ENCODE measurements at regions of chr20 and their contacts with region 1.

Region 1: GRCh38 chr20:44080646-44081267 is 106.2 kb downstream of the JPH2 start:
- DNase-seq: peak; percentile 55
- ATAC-seq: peak; percentile 93
- H3K4me3 ChIP-seq: no peak overlapping the region
- H3K27ac ChIP-seq: no peak overlapping the region
- H3K4me1 ChIP-seq: 0 out of 2 replicates have a peak, but pooled peaks cover 4% of the 10 kb centered on the region
- H3K27me3 ChIP-seq: no peaks in the 10 kb centered on the region
- CTCF ChIP-seq: peak; percentile 93 to 99 (median 99); a peak in 5 of 6 replicates
- EP300 ChIP-seq: no peak
- POLR2A ChIP-seq: no peak
- RAD21 ChIP-seq: peak; percentile 100

Region 2: DNA sequence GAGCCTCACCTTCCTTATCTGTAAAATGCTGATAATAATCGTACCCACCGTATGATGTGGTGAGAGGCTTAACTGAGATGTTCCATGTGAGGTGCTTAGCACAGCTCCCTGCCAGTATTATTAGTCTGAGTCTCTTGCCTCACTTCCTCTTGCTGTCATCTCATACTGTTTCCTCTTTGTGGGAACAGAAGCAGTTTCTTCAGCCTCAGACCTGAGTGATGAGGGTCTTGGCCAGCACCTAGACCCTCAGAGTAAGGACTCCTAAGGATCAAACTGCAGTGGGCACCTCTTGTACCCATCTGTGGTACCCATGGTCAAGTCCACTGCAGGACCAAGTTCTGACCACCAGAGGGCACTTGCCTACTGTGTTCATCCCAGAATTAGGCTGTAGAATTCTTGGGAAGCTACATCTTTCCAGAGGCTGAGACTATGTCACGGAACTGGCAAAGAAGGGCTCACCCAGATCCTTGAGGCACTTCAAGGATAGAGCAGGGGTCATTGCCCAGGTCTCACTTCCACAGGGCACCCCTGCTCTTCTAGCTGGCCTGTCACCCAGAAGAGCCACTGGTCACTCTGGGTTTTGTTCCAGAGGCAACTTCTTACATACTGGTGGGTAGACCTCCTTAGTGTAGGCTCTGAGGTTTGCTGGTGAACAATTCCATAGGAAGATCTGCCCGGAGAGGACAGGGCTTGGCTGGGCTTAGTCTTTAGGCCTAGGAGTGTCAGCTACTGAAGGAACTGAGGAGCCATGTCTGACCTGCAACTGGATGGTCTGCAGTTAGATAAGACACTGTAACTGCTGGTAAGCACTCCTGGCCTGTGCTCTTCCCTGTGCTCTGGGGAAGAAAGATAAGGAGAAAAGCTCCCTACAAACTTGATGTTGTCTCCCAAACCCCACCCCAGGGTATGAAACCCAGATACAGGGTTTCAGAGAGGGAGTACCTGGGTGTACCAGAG is 542.6 kb before region 1 on chr20:
- CTCF ChIA-PET with region 1: interaction called, 40 read pairs
- POLR2A ChIA-PET with region 1: no interaction called
- RAD21 ChIA-PET with region 1: interaction called, 8 read pairs
- SMC1A ChIA-PET with region 1: interaction called, 5 read pairs
- in situ Hi-C with region 1: loop called (anchors 5 kb)
- intact Hi-C with region 1: no loop called
- DNase-seq: no peak
- ATAC-seq: peak; percentile 85
- H3K4me3 ChIP-seq: no peak overlapping the region
- H3K27ac ChIP-seq: no peak overlapping the region
- H3K4me1 ChIP-seq: no peaks in the 10 kb centered on the region
- H3K27me3 ChIP-seq: no peaks in the 10 kb centered on the region; a peak in 2 of 4 replicates
- CTCF ChIP-seq: peak; percentile 83 to 92 (median 90)
- EP300 ChIP-seq: no peak
- POLR2A ChIP-seq: no peak
- RAD21 ChIP-seq: peak; percentile 82

Region 3: DNA sequence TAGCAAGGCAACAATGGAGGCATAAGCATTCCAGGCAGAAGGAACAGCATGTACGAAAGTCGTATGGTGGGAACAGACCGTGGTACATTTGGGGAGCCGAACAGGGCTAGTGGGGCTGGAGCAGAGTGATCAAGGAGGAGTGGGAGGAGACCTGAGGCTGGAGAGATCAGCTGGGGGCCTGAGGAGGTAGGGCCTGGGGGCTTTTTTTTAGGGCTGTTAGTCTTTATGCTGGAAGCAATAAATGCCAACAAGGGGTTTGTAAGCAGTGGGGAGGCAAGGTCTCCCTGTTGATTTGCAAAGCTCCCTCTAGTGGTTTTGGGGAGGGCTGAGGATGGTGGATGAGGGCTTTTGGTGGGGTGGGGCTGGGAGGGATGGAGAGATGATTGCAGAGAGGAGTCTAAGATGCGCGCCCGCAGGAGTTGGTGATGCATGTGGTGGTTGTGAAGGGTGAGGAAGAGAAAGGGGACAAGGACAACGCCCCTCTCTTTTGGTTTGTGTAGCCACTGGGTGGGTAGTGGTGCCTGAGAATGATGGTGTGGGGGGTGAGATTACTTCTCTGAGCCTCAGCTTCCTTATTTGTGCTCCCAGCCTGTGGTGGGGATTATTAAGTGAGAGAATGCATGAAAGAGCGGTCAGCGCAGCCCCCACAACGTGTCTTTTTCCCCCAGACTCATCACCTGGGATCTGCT is 240.2 kb before region 1 on chr20:
- CTCF ChIA-PET with region 1: interaction called, 14 read pairs
- POLR2A ChIA-PET with region 1: no interaction called
- RAD21 ChIA-PET with region 1: interaction called, 7 read pairs
- SMC1A ChIA-PET with region 1: interaction called, 54 read pairs
- in situ Hi-C with region 1: no loop called
- intact Hi-C with region 1: loop called (anchors 2 kb)
- DNase-seq: no peak
- ATAC-seq: peak; percentile 78
- H3K4me3 ChIP-seq: no peak overlapping the region
- H3K27ac ChIP-seq: peak overlapping the region; percentile 23; the same call in 1 of the 2 replicates
- H3K4me1 ChIP-seq: peaks cover 37% of the 10 kb centered on the region
- H3K27me3 ChIP-seq: no peaks in the 10 kb centered on the region
- CTCF ChIP-seq: peak; percentile 35 to 70 (median 51)
- EP300 ChIP-seq: no peak
- POLR2A ChIP-seq: no peak
- RAD21 ChIP-seq: peak; percentile 70

Region 4: DNA sequence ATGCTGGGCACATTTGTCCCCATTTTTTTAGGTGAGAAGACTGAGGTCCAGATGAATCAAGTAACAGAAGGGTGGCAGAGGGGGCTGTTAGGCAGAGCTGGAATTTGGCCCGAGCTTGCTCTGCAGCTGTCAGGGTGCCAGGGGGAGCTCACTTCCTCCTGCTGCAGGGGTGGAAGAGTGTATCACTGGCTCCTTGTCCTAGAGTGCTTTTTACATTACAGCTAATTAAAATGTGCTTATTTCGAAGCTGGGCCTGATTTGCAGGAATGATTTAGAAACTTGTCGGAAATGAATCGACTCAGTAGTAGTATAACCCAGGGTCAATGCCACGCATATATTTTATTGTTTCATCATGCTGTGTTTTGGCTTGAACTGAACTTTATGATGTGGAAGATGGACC is 155.0 kb before region 1 on chr20:
- CTCF ChIA-PET with region 1: interaction called, 13 read pairs
- POLR2A ChIA-PET with region 1: interaction called, 7 read pairs
- RAD21 ChIA-PET with region 1: interaction called, 10 read pairs
- SMC1A ChIA-PET with region 1: interaction called, 15 read pairs
- in situ Hi-C with region 1: no loop called
- intact Hi-C with region 1: no loop called
- DNase-seq: no peak
- ATAC-seq: peak; percentile 54
- H3K4me3 ChIP-seq: no peak overlapping the region
- H3K27ac ChIP-seq: no peak overlapping the region
- H3K4me1 ChIP-seq: peaks cover 36% of the 10 kb centered on the region
- H3K27me3 ChIP-seq: no peaks in the 10 kb centered on the region
- CTCF ChIP-seq: peak in 2 of 3 experiments; percentile 8 to 36; a peak in 2 of 6 replicates
- EP300 ChIP-seq: no peak
- POLR2A ChIP-seq: no peak
- RAD21 ChIP-seq: peak; percentile 24; the same call in 1 of the 2 replicates

Region 5: GRCh38 chr20:44001667-44002596 is 78.8 kb before region 1 on chr20:
- CTCF ChIA-PET with region 1: interaction called, 10 read pairs
- POLR2A ChIA-PET with region 1: no interaction called
- RAD21 ChIA-PET with region 1: interaction called, 9 read pairs
- SMC1A ChIA-PET with region 1: interaction called, 5 read pairs
- in situ Hi-C with region 1: no loop called
- intact Hi-C with region 1: no loop called
- DNase-seq: peak; percentile 74
- ATAC-seq: peak; percentile 90
- H3K4me3 ChIP-seq: no peak overlapping the region
- H3K27ac ChIP-seq: no peak overlapping the region
- H3K4me1 ChIP-seq: peaks cover 16% of the 10 kb centered on the region
- H3K27me3 ChIP-seq: no peaks in the 10 kb centered on the region
- CTCF ChIP-seq: no peak
- EP300 ChIP-seq: peak in 1 of 2 experiments; percentile 6; a peak in 2 of 4 replicates
- POLR2A ChIP-seq: no peak
- RAD21 ChIP-seq: no peak

Region 6: GRCh38 chr20:44092551-44093248 is 11.9 kb after region 1 on chr20:
- CTCF ChIA-PET with region 1: interaction called, 30 read pairs
- POLR2A ChIA-PET with region 1: interaction called, 5 read pairs
- RAD21 ChIA-PET with region 1: interaction called, 9 read pairs
- SMC1A ChIA-PET with region 1: interaction called, 44 read pairs
- in situ Hi-C with region 1: no loop called
- intact Hi-C with region 1: no loop called
- DNase-seq: no peak
- ATAC-seq: peak; percentile 81
- H3K4me3 ChIP-seq: no peak overlapping the region
- H3K27ac ChIP-seq: no peak overlapping the region
- H3K4me1 ChIP-seq: peaks cover 8% of the 10 kb centered on the region
- H3K27me3 ChIP-seq: no peaks in the 10 kb centered on the region
- CTCF ChIP-seq: peak; percentile 49 to 58 (median 53)
- EP300 ChIP-seq: no peak
- POLR2A ChIP-seq: no peak
- RAD21 ChIP-seq: peak; percentile 59